ENCODE measurements at regions of chr11 and their contacts with region 1.

Region 1: GRCh38 chr11:75388386-75389275 is 10.7 kb upstream of the RPS3 start:
- DNase-seq: peak; percentile 83
- ATAC-seq: peak; percentile 91
- H3K4me3 Mint-ChIP-seq: no peak overlapping the region
- H3K27ac Mint-ChIP-seq: no peak overlapping the region
- H3K4me1 Mint-ChIP-seq: peaks cover 12% of the 10 kb centered on the region
- H3K27me3 Mint-ChIP-seq: no peaks in the 10 kb centered on the region
- CTCF ChIP-seq: peak; percentile 79

Region 2: DNA sequence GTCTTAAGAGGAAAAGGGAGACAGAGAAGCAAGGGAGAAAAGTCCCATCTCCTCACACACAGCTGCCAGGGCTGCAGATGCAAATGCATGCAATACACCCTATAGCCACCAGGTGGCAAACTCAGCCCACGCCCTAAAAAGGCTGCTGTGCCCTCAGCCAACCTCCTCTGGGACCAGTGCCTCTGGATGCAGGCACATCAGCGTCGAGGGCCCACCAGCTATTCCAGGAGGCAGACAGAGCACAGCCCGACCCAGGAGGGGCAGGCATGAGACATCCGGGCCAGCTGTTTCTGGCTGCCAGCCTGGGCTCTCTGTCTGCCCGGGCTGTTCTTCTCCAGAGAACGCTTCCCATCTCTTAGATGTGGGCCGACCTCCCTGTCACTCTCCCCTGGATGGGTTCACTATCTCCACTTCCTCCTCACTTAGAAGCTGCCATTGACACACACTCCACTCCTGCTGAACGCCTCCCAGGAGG is 108.4 kb before region 1 on chr11:
- CTCF ChIA-PET with region 1: interaction called, 442 read pairs
- POLR2A ChIA-PET with region 1: interaction called, 8 read pairs
- intact Hi-C with region 1: loop called (anchors 1 kb)
- DNase-seq: peak; percentile 82
- ATAC-seq: peak; percentile 82
- H3K4me3 Mint-ChIP-seq: no peak overlapping the region
- H3K27ac Mint-ChIP-seq: no peak overlapping the region
- H3K4me1 Mint-ChIP-seq: peaks cover 32% of the 10 kb centered on the region
- H3K27me3 Mint-ChIP-seq: no peaks in the 10 kb centered on the region
- CTCF ChIP-seq: peak; percentile 98

Region 3: GRCh38 chr11:75342903-75343870 is 45.4 kb before region 1 on chr11:
- CTCF ChIA-PET with region 1: interaction called, 23 read pairs
- POLR2A ChIA-PET with region 1: no interaction called
- intact Hi-C with region 1: no loop called
- DNase-seq: no peak
- ATAC-seq: no peak
- H3K4me3 Mint-ChIP-seq: no peak overlapping the region
- H3K27ac Mint-ChIP-seq: peak overlapping the region; percentile 6
- H3K4me1 Mint-ChIP-seq: peaks cover 97% of the 10 kb centered on the region
- H3K27me3 Mint-ChIP-seq: no peaks in the 10 kb centered on the region
- CTCF ChIP-seq: no peak

Region 4: GRCh38 chr11:75371941-75372789 is 16.5 kb before region 1 on chr11:
- CTCF ChIA-PET with region 1: interaction called, 21 read pairs
- POLR2A ChIA-PET with region 1: interaction called, 5 read pairs
- intact Hi-C with region 1: no loop called
- DNase-seq: no peak
- ATAC-seq: no peak
- H3K4me3 Mint-ChIP-seq: no peak overlapping the region
- H3K27ac Mint-ChIP-seq: no peak overlapping the region
- H3K4me1 Mint-ChIP-seq: peaks cover 11% of the 10 kb centered on the region
- H3K27me3 Mint-ChIP-seq: no peaks in the 10 kb centered on the region
- CTCF ChIP-seq: no peak

Region 5: DNA sequence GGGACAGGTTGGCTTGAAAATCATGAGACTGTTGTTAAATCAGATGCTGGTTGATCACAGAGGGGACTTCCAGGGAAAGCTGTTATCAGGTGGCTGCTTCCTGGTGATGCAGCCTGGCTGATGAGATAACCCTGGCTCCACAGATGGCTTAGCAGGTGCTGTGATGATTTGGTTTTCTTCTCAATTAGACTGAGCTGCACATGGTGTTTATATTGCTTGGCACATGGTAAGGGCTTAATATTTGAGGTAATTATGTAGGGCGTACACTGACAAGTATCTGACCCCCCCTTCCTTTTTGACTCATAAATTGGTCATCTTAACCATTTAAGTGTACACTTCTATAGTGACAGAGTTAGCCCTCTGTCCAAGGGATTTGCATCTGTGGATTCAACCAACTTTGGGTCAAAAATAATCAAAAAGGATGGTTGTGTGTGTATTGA is 17.7 kb after region 1 on chr11:
- CTCF ChIA-PET with region 1: interaction called, 14 read pairs
- POLR2A ChIA-PET with region 1: interaction called, 26 read pairs
- intact Hi-C with region 1: no loop called
- DNase-seq: no peak
- ATAC-seq: no peak
- H3K4me3 Mint-ChIP-seq: no peak overlapping the region
- H3K27ac Mint-ChIP-seq: peak overlapping the region; percentile 70
- H3K4me1 Mint-ChIP-seq: peaks cover 49% of the 10 kb centered on the region
- H3K27me3 Mint-ChIP-seq: no peaks in the 10 kb centered on the region
- CTCF ChIP-seq: no peak

Region 6: DNA sequence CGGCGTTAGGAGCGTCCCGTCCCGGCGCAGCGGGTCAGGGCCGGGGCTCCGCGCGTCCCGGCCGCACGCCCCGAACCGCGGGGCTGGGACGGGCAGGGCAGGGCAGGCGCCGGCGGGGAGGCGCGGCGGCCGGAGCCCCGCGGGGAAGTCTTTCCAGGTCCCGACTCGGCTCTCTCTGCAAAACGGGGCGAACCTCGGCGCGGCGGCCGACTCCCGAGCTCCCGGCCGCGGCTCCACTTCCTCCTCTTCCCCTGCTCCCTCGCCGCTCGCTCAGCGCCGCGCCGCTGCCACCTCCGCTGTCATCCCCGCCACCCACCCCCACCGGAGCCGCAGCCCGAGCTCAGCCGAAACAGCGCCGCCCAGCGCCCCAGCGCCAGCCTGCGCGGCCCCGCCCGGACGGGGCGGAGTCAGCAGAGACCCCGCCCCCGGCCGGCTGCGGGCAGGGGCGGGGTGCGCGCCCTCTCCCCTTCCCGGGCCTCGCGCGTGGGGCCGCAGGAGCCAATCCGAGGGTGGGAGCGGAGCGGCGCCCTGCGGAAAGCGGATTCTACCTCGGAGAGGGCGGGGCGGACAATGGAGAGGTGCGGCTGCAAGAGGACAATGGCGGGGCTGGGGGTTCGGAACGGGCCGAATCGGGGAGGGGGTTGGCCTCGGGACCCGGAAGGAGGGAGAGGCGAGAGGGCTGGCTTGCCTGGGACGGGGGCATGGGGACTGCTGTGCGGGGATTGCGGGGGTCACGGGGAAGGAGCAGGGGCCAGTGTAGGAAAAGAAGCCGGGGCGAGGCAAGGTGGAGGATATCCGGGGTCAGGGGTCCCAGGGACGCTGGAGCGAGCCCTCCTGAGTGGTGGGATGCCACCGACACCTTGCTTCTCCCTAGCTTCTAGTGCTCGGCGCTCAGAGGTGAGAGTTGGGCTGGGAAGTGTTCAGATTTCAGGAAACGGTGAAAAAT is 137.2 kb after region 1 on chr11 and contains the start of gene GDPD5:
- CTCF ChIA-PET with region 1: interaction called, 66 read pairs
- POLR2A ChIA-PET with region 1: interaction called, 3 read pairs
- intact Hi-C with region 1: loop called (anchors 5 kb)
- DNase-seq: peak; percentile 87
- ATAC-seq: peak; percentile 97
- H3K4me3 Mint-ChIP-seq: peak within 1 kb of the TSS; percentile 74
- H3K27ac Mint-ChIP-seq: peak within 1 kb of the TSS; percentile 14
- H3K4me1 Mint-ChIP-seq: peaks cover 20% of the 10 kb centered on the region
- H3K27me3 Mint-ChIP-seq: peaks cover 5% of the 10 kb centered on the region
- CTCF ChIP-seq: peak; percentile 28
- total RNA-seq, gene GDPD5: 7.8 to 11.0 TPM

Region 7: GRCh38 chr11:75592715-75593114 is 204.1 kb after region 1 on chr11:
- CTCF ChIA-PET with region 1: no interaction called
- POLR2A ChIA-PET with region 1: no interaction called
- intact Hi-C with region 1: no loop called
- DNase-seq: no peak
- ATAC-seq: no peak
- H3K4me3 Mint-ChIP-seq: no peak overlapping the region
- H3K27ac Mint-ChIP-seq: no peak overlapping the region
- H3K4me1 Mint-ChIP-seq: peaks cover 6% of the 10 kb centered on the region
- H3K27me3 Mint-ChIP-seq: no peaks in the 10 kb centered on the region
- CTCF ChIP-seq: no peak